CD4-positive, alpha-beta T cell (primary cell): ENCODE measurements at regions of chr5 and their contacts with region 1.

Region 1: GRCh38 chr5:133111299-133111698 is 59.5 kb downstream of the HSPA4 start:
- DNase-seq: peak; percentile 69 to 92 (median 76)
- ATAC-seq: peak; percentile 73
- H3K4me3 ChIP-seq: no peak overlapping the region
- H3K4me3 Mint-ChIP-seq: no peak overlapping the region
- H3K27ac ChIP-seq: no peak overlapping the region
- H3K27ac Mint-ChIP-seq: no peak overlapping the region
- H3K4me1 ChIP-seq: peaks cover 14% of the 10 kb centered on the region
- H3K4me1 Mint-ChIP-seq: peaks cover 23% of the 10 kb centered on the region
- H3K27me3 ChIP-seq: no peaks in the 10 kb centered on the region
- H3K27me3 Mint-ChIP-seq: no peaks in the 10 kb centered on the region
- CTCF ChIP-seq: peak; percentile 88

Region 2: GRCh38 chr5:133130387-133131118 is 19.3 kb after region 1 on chr5:
- CTCF ChIA-PET with region 1: no interaction called
- POLR2A ChIA-PET with region 1: no interaction called
- intact Hi-C with region 1: no loop called
- DNase-seq: no peak
- ATAC-seq: no peak
- H3K4me3 ChIP-seq: no peak overlapping the region
- H3K4me3 Mint-ChIP-seq: no peak overlapping the region
- H3K27ac ChIP-seq: no peak overlapping the region
- H3K27ac Mint-ChIP-seq: no peak overlapping the region
- H3K4me1 ChIP-seq: no peaks in the 10 kb centered on the region
- H3K4me1 Mint-ChIP-seq: no peaks in the 10 kb centered on the region
- H3K27me3 ChIP-seq: no peaks in the 10 kb centered on the region
- H3K27me3 Mint-ChIP-seq: no peaks in the 10 kb centered on the region
- CTCF ChIP-seq: no peak

Region 3: DNA sequence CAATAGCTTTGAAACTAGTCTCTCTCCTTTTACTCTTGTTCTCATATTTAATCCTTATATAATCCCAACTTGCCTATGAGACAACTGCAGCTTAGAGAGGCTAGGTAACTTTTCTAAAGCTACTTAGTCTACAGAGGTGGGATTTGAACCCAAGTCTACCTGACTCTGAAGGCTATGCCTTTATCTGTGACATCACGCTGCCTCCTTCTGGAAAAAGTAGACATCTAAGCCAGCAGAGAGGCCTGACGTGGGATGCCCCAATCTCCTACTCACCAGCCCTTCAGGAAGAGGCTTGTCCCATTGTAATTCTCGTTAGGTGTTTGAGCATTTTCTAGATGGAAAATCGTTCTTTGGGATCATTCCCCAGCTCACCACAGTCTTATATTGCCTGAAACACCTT is 108.0 kb after region 1 on chr5:
- CTCF ChIA-PET with region 1: no interaction called
- POLR2A ChIA-PET with region 1: no interaction called
- intact Hi-C with region 1: loop called (anchors 1 kb)
- DNase-seq: peak in 1 of 14 experiments; percentile 20
- ATAC-seq: no peak
- H3K4me3 ChIP-seq: no peak overlapping the region
- H3K4me3 Mint-ChIP-seq: no peak overlapping the region
- H3K27ac ChIP-seq: no peak overlapping the region
- H3K27ac Mint-ChIP-seq: no peak overlapping the region
- H3K4me1 ChIP-seq: no peaks in the 10 kb centered on the region
- H3K4me1 Mint-ChIP-seq: no peaks in the 10 kb centered on the region
- H3K27me3 ChIP-seq: no peaks in the 10 kb centered on the region
- H3K27me3 Mint-ChIP-seq: no peaks in the 10 kb centered on the region
- CTCF ChIP-seq: no peak

Region 4: DNA sequence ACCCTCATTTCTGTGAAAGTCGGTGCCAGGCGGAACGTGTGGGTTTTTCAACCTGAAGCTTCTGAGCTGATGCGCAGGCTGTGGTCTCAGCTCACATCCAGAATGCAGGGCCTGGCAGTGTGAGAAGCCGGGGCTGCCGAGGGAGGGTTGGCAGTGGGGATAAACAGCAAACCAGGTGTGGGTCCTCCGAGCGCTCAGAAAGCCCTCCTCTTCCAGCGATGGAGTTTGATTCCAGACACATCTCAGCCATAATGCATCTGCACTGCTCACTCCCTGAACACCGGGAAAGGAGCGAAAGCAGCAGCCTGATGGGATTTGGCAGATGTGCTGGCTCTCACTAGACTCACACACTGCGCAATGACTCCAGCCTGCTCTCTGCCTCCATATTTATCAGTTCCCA is 220.6 kb after region 1 on chr5:
- CTCF ChIA-PET with region 1: no interaction called
- POLR2A ChIA-PET with region 1: no interaction called
- intact Hi-C with region 1: no loop called
- DNase-seq: no peak
- ATAC-seq: no peak
- H3K4me3 ChIP-seq: no peak overlapping the region
- H3K4me3 Mint-ChIP-seq: no peak overlapping the region
- H3K27ac ChIP-seq: no peak overlapping the region
- H3K27ac Mint-ChIP-seq: no peak overlapping the region
- H3K4me1 ChIP-seq: peaks cover 4% of the 10 kb centered on the region
- H3K4me1 Mint-ChIP-seq: peaks cover 15% of the 10 kb centered on the region
- H3K27me3 ChIP-seq: no peaks in the 10 kb centered on the region
- H3K27me3 Mint-ChIP-seq: no peaks in the 10 kb centered on the region
- CTCF ChIP-seq: no peak

Region 5: DNA sequence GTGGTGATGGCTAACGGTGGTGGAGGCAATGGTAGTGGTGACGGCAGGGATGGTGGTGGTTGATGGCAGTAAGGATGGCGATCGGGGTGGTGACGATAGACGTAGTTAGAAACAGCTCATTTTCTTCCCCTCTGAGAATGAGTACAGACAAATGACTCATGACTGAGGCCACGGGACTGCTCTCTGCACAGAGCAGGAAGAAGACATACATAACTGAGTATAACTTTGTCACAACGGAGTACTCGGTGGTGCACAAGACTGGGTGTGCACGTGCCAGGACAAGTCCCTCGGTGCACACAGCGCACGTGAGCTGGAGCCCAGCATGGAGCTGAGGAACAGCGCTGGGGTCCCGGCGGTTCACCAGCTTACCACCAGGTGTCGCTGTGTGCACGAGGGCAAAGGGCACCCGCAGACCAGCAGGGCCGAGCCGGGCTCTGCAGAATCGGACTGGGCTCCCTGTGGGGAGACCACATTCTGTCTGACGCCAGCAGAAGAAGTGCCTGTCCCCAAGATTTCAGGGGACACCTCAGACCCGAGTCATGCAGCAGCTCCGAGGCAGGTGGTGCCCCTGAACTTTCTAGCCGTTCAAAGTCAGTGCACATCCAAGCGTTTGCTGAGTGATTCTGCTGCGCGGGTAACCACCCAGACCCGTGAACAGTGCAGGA is 312.5 kb after region 1 on chr5:
- CTCF ChIA-PET with region 1: no interaction called
- POLR2A ChIA-PET with region 1: no interaction called
- intact Hi-C with region 1: loop called in 1 of 2 experiments (anchors 10 kb)
- DNase-seq: peak; percentile 46 to 76 (median 56)
- ATAC-seq: peak; percentile 78
- H3K4me3 ChIP-seq: no peak overlapping the region
- H3K4me3 Mint-ChIP-seq: no peak overlapping the region
- H3K27ac ChIP-seq: no peak overlapping the region
- H3K27ac Mint-ChIP-seq: no peak overlapping the region
- H3K4me1 ChIP-seq: peaks cover 11% of the 10 kb centered on the region
- H3K4me1 Mint-ChIP-seq: peaks cover 9% of the 10 kb centered on the region
- H3K27me3 ChIP-seq: no peaks in the 10 kb centered on the region
- H3K27me3 Mint-ChIP-seq: no peaks in the 10 kb centered on the region
- CTCF ChIP-seq: peak; percentile 94

Region 6: GRCh38 chr5:133610489-133611356 is 499.4 kb after region 1 on chr5:
- CTCF ChIA-PET with region 1: no interaction called
- POLR2A ChIA-PET with region 1: no interaction called
- intact Hi-C with region 1: loop called in 1 of 2 experiments (anchors 10 kb)
- DNase-seq: peak in 7 of 14 experiments; percentile 11 to 49 (median 21)
- ATAC-seq: peak; percentile 43
- H3K4me3 ChIP-seq: peak overlapping the region; percentile 41
- H3K4me3 Mint-ChIP-seq: peak overlapping the region; percentile 62
- H3K27ac ChIP-seq: no peak overlapping the region
- H3K27ac Mint-ChIP-seq: no peak overlapping the region
- H3K4me1 ChIP-seq: peaks cover 16% of the 10 kb centered on the region
- H3K4me1 Mint-ChIP-seq: peaks cover 11% of the 10 kb centered on the region
- H3K27me3 ChIP-seq: peaks cover 50 to 51% of the 10 kb centered on the region in 2 experiments
- H3K27me3 Mint-ChIP-seq: peaks cover 70% of the 10 kb centered on the region
- CTCF ChIP-seq: peak; percentile 18

Region 7: DNA sequence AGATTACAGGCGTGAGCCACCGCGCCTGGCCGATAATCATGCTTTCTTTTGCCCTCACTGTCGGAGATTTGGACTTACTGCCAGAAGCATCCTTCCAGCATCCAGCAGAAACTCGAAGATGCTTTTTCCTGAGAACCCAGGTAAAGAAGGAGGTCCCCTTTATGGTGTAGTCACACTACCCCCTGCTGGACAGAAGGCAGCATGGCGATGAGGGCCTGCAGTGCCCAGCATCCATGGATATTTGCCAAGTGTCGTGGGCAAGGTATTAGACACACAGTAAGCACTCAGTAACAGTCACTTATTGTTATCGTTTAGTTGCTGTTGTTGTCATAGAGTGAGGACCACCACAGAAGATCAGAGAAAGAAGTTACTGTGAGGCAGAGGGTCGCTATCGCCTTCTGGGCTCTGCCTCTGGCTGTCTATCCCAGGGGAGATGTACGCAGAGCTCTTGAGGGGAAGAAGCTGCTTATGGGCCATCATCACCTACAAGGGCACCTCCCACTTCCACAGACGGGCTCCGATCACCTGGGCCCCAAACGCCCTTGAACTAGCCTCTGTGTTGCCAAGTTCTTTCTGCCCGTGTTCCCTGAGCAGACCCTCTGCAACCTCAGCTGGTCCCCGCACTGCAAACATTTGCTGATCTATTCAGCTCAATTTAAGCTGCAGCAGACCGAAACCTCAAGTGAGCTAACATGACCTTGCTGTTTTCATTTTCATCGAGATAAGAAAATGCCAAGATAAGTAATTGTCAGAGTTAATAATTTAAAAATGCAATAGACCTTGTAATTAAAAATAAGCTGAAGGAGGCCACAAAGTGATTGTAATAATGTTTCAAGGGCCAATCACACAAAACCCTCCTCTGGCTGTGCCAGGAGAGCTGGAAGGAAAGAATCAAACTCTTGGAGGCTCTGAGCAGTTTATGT is 833.2 kb after region 1 on chr5:
- CTCF ChIA-PET with region 1: no interaction called
- POLR2A ChIA-PET with region 1: no interaction called
- intact Hi-C with region 1: loop called in 1 of 2 experiments (anchors 10 kb)
- DNase-seq: peak in 7 of 14 experiments; percentile 9 to 60 (median 18)
- ATAC-seq: no peak
- H3K4me3 ChIP-seq: no peak overlapping the region
- H3K4me3 Mint-ChIP-seq: no peak overlapping the region
- H3K27ac ChIP-seq: no peak overlapping the region
- H3K27ac Mint-ChIP-seq: no peak overlapping the region
- H3K4me1 ChIP-seq: no peaks in the 10 kb centered on the region
- H3K4me1 Mint-ChIP-seq: no peaks in the 10 kb centered on the region
- H3K27me3 ChIP-seq: no peaks in the 10 kb centered on the region
- H3K27me3 Mint-ChIP-seq: no peaks in the 10 kb centered on the region
- CTCF ChIP-seq: no peak